PC-9 (cell line): ENCODE measurements at regions of chr9 and their contacts with region 1.

Region 1: DNA sequence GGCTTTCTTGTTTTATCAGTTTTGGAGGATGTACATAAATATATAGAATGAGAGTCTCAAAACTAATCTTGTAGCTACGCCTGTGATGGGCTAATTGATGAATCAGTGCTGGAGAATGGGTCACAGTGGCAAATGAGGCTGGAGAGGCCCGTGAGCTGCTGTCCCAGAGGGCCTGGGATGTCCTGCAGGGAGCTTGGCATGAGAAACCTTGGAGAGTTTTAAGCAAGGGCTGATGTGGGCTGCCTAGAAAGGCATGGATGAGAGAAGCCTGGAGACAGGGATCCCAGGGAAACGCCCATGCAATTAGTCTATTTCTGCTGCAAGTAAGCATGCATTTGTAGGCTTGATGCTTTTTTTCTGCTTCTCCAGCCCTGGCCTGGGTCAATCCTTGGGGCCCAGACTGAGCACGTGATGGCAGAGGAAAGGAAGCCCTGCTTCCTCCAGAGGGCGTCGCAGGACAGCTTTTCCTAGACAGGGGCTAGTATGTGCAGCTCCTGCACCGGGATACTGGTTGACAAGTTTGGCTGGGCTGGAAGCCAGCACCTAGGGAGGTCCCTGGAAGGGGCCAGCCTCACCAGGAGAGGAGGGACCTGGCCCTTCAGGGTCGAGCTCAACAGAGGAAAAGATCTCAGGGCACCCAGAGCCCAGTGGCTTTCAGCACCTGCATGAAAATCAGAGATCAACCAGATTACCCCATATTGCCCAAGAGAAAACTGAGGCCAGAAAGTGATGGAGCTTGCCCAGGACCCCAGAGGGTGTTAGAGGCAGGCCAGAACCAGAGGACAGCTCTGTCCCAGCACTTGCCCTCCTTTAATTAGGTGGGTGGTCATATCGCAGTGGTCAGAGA is 67.4 kb downstream of the KLF4 start:
- DNase-seq: peak; percentile 65 to 79
- H3K4me3 ChIP-seq: no peak overlapping the region
- H3K27ac ChIP-seq: no peak overlapping the region
- H3K4me1 ChIP-seq: no peaks in the 10 kb centered on the region
- H3K27me3 ChIP-seq: no peaks in the 10 kb centered on the region
- CTCF ChIP-seq: peak; percentile 88

Region 2: DNA sequence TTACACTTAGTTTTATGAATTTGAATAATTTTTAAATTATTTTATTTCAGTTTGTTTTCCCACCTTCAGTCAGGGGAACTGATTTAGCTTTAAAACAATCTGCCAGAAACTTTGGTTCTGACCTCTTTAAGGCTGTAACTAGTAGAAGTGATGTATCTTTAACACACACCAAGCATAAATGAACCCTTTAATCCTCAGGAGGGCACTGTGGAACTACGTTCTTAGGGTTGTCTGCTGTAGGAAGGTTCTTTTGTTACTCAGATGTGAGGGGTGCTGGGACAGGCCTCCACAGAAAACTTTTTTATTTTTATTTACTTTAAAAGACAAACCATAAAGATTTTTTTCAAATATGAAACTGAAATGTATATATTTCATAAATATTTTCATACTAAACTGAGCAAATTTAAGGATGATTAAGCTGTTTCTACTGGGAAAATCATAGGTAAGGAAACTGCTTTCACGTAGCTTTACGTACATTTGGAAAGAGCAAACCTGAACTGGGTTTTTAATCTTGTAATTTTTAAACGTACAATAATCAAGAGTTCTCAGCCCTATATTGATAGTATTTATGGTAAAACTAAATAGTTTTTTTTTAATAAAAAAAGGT is 62.0 kb after region 1 on chr9:
- CTCF ChIA-PET with region 1: interaction called, 4 read pairs
- POLR2A ChIA-PET with region 1: no interaction called
- intact Hi-C with region 1: loop called (anchors 2 kb)
- DNase-seq: peak; percentile 42 to 65
- H3K4me3 ChIP-seq: peak overlapping the region; percentile 100; the same call in 1 of the 2 replicates
- H3K27ac ChIP-seq: 0 out of 2 replicates have a peak overlapping the region, but pooled peaks have one; percentile 50
- H3K4me1 ChIP-seq: peaks cover 45% of the 10 kb centered on the region
- H3K27me3 ChIP-seq: no peaks in the 10 kb centered on the region
- CTCF ChIP-seq: peak; percentile 72

Region 3: GRCh38 chr9:108282872-108283271 is 860.7 kb after region 1 on chr9:
- CTCF ChIA-PET with region 1: interaction called, 10 read pairs
- POLR2A ChIA-PET with region 1: no interaction called
- intact Hi-C with region 1: no loop called
- DNase-seq: no peak
- H3K4me3 ChIP-seq: no peak overlapping the region
- H3K27ac ChIP-seq: no peak overlapping the region
- H3K4me1 ChIP-seq: 0 out of 2 replicates have a peak, but pooled peaks cover 6% of the 10 kb centered on the region
- H3K27me3 ChIP-seq: no peaks in the 10 kb centered on the region
- CTCF ChIP-seq: peak; percentile 43

Region 4: DNA sequence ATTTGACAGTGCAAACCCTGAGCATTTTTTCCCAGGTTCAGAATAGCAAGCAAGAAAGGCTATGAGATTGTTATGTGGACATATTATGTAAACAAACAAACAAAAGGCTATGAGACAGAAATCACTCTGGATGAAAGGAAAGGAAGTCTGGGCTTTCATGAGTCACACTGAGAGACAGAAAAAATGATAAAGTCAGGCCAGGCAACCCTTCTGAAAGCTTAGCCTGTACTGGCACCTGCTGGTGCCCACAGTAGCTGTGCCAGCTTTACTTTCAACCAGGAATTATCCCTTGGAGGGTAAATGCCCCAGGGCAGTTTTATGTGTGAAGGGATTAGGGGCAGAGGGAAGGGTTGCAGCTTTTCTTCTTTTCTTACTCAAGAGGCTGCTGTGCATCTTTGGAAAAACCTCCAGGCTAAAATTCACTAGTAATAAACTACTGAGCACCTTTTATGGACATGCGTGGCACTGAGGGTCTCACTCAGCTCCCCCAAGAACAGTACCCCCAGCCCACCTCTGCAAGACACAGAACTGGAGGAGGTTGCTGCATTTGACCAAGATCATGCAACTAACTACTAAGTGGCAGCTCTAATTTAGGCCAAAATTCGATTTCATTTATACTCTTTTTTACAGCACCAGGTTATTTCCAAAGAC is 1391.9 kb after region 1 on chr9:
- CTCF ChIA-PET with region 1: no interaction called
- POLR2A ChIA-PET with region 1: no interaction called
- intact Hi-C with region 1: loop called (anchors 1 kb)
- DNase-seq: peak; percentile 73 to 90
- H3K4me3 ChIP-seq: no peak overlapping the region
- H3K27ac ChIP-seq: 0 out of 2 replicates have a peak overlapping the region, but pooled peaks have one; percentile 35
- H3K4me1 ChIP-seq: peaks cover 20% of the 10 kb centered on the region
- H3K27me3 ChIP-seq: no peaks in the 10 kb centered on the region
- CTCF ChIP-seq: peak; percentile 87

Region 5: GRCh38 chr9:108830272-108830671 is 1408.1 kb after region 1 on chr9:
- CTCF ChIA-PET with region 1: interaction called, 3 read pairs
- POLR2A ChIA-PET with region 1: interaction called, 25 read pairs
- intact Hi-C with region 1: no loop called
- DNase-seq: no peak
- H3K4me3 ChIP-seq: no peak overlapping the region
- H3K27ac ChIP-seq: no peak overlapping the region
- H3K4me1 ChIP-seq: 0 out of 2 replicates have a peak, but pooled peaks cover 5% of the 10 kb centered on the region
- H3K27me3 ChIP-seq: no peaks in the 10 kb centered on the region
- CTCF ChIP-seq: no peak